ENCODE measurements at regions of chr22 and their contacts with region 1.

Region 1: GRCh38 chr22:50190182-50190940 is 4.6 kb downstream of the TRABD start:
- DNase-seq: peak; percentile 86 to 94 (median 92)
- H3K4me3 ChIP-seq: peak overlapping the region; percentile 8 to 70 (median 62)
- H3K27ac ChIP-seq: peak overlapping the region; percentile 89 to 93
- H3K4me1 ChIP-seq: peaks cover 0 to 82% (median 73%) of the 10 kb centered on the region in 4 experiments
- H3K27me3 ChIP-seq: no peaks in the 10 kb centered on the region

Region 2: DNA sequence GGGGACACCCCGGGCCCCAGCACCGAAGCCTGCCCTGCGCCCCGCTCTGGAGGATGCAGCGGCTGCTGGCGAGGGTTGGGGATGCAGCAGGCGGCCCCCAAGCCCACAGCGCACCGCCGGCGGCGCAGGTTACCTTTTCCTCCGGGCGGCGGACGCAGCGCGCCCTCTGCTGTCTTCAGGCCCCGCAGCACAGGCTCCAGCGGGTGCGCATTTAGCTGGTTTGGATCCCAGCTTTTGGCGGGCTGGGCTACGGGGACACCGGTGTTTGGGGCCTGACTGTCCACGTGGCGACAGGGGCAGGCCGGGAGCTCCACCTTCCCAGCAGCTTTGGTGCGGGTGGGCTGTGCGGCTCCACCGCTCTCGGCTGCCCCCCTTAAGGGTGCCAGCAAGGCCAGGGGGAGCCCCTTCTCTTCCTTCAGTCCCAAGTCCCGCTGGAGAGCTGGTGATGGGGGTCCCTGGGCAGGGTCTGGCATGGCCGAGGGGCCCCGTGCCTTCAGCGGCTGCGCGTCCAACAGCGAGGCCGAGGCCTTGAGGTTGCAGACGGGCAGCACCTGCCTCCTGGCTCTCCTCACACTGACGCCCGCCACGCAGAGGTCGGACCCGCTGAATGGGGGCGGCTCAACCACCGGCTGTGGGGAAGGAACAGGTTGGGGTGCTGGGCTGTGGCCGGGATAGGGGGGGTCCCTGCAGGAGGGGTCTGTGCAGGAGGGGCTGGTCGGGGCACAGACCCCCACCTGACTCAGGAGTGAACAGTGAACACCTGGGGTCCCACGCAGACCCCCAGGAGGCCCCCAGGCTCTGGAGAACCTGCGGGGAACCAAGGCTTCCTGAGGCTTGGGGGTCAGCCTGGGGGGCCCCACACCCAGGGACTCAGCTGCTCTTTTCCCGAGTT is 159.8 kb before region 1 on chr22:
- CTCF ChIA-PET with region 1: no interaction called
- POLR2A ChIA-PET with region 1: interaction called, 10 read pairs
- DNase-seq: peak; percentile 87 to 93 (median 93)
- H3K4me3 ChIP-seq: peak overlapping the region in 2 of 7 experiments; percentile 32 to 60
- H3K27ac ChIP-seq: no peak overlapping the region
- H3K4me1 ChIP-seq: peaks cover 0 to 41% (median 21%) of the 10 kb centered on the region in 4 experiments
- H3K27me3 ChIP-seq: peaks cover 0 to 2% (median 0%) of the 10 kb centered on the region in 5 experiments

Region 3: GRCh38 chr22:50085211-50085972 is 105.0 kb before region 1 on chr22 and contains the start of gene MLC1:
- CTCF ChIA-PET with region 1: interaction called, 3 read pairs
- POLR2A ChIA-PET with region 1: interaction called, 10 read pairs
- DNase-seq: peak; percentile 70 to 93 (median 91)
- H3K4me3 ChIP-seq: peak within 1 kb of the TSS in 1 of 7 experiments; percentile 27
- H3K27ac ChIP-seq: no peak within 1 kb of the TSS
- H3K4me1 ChIP-seq: peaks cover 0 to 37% (median 34%) of the 10 kb centered on the region in 4 experiments
- H3K27me3 ChIP-seq: no peaks in the 10 kb centered on the region

Region 4: DNA sequence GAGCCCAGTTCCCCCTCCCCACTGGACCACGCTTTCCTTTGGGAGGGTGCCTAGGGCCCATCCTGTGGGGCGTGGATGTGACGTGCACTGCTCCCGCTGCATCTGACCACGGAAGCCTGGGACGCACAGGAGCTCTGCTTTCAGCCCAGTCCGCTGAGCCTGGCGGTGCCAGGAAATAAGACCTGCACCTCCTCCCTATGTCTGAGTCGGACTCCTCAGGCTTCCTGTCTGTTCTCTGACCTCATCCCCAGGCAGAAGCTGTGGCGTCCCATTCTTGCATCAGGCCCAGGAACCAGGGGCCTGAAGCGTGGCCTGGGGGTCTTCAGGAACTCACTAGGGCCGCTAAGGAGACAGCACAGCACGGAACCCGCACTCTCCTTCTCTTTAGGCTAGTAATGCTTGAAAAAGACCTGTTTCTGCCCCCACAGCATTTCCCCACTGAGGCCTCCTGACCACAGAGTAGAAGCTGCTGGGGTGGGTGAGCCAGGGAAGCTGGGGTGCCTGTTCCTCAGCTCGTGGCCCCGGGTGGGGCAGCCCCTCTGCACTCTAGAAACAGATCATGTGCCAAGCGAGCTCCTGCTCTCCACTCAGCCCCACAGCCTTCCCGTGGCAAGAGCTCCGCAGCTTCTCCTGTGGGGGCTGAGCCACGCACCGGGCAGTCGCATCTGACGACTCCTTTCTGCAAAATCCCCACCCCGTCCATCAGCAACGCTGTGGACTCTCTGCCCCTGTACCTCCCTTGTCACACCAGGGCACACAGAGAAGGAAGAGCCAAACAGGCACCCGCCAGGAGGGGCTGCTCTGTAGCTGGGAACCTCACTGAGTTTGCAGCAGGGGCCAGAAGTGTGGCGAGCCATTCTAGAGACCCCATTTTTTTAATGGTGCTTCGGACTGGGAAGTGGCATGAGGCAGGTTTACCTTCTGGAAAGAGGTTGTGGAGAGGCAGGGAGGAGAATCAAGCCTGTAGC is 77.9 kb before region 1 on chr22:
- CTCF ChIA-PET with region 1: no interaction called
- POLR2A ChIA-PET with region 1: interaction called, 28 read pairs
- DNase-seq: peak; percentile 55 to 85 (median 78)
- H3K4me3 ChIP-seq: peak overlapping the region in 4 of 7 experiments; percentile 28 to 66 (median 46)
- H3K27ac ChIP-seq: peak overlapping the region; percentile 66 to 83
- H3K4me1 ChIP-seq: peaks cover 2 to 30% (median 25%) of the 10 kb centered on the region in 4 experiments
- H3K27me3 ChIP-seq: no peaks in the 10 kb centered on the region

Region 5: GRCh38 chr22:50169774-50170341 is 20.5 kb before region 1 on chr22:
- CTCF ChIA-PET with region 1: interaction called, 14 read pairs
- POLR2A ChIA-PET with region 1: interaction called, 11 read pairs
- DNase-seq: peak; percentile 70 to 91 (median 91)
- H3K4me3 ChIP-seq: peak overlapping the region in 6 of 7 experiments; percentile 34 to 64 (median 47)
- H3K27ac ChIP-seq: no peak overlapping the region
- H3K4me1 ChIP-seq: peaks cover 0 to 38% (median 31%) of the 10 kb centered on the region in 4 experiments
- H3K27me3 ChIP-seq: peaks cover 0 to 13% (median 7%) of the 10 kb centered on the region in 5 experiments

Region 6: GRCh38 chr22:50200461-50201190 is 10.3 kb after region 1 on chr22 and contains the start of gene SELENOO:
- CTCF ChIA-PET with region 1: interaction called, 3 read pairs
- POLR2A ChIA-PET with region 1: interaction called, 55 read pairs
- DNase-seq: peak; percentile 84 to 89 (median 87)
- H3K4me3 ChIP-seq: peak within 1 kb of the TSS; percentile 49 to 81 (median 67)
- H3K27ac ChIP-seq: peak within 1 kb of the TSS; percentile 25 to 58
- H3K4me1 ChIP-seq: peaks cover 0 to 32% (median 22%) of the 10 kb centered on the region in 4 experiments
- H3K27me3 ChIP-seq: no peaks in the 10 kb centered on the region

Region 7: GRCh38 chr22:50209893-50210292 is 19.5 kb after region 1 on chr22:
- CTCF ChIA-PET with region 1: interaction called, 6 read pairs
- POLR2A ChIA-PET with region 1: interaction called, 10 read pairs
- DNase-seq: peak; percentile 62 to 86 (median 75)
- H3K4me3 ChIP-seq: no peak overlapping the region
- H3K27ac ChIP-seq: no peak overlapping the region
- H3K4me1 ChIP-seq: peaks cover 0 to 3% (median 0%) of the 10 kb centered on the region in 4 experiments
- H3K27me3 ChIP-seq: no peaks in the 10 kb centered on the region